ENCODE measurements at regions of chr3 and their contacts with region 1.

Region 1: GRCh38 chr3:53709860-53710674 is 136.2 kb downstream of the CHDH start:
- DNase-seq: peak in 2 of 3 donors; percentile 66 to 77
- ATAC-seq: peak; percentile 88
- H3K4me3 ChIP-seq: no peak overlapping the region
- H3K4me1 ChIP-seq: no peaks in the 10 kb centered on the region
- CTCF ChIP-seq: peak; percentile 62

Region 2: GRCh38 chr3:53295410-53295809 is 414.7 kb before region 1 on chr3:
- intact Hi-C with region 1: loop called in 1 of 2 experiments (anchors 5 kb)
- DNase-seq: no peak
- ATAC-seq: no peak
- H3K4me3 ChIP-seq: no peak overlapping the region
- H3K4me1 ChIP-seq: no peaks in the 10 kb centered on the region
- CTCF ChIP-seq: no peak

Region 3: GRCh38 chr3:53834429-53835095 is 124.5 kb after region 1 on chr3:
- intact Hi-C with region 1: no loop called
- DNase-seq: no peak
- ATAC-seq: no peak
- H3K4me3 ChIP-seq: no peak overlapping the region
- H3K4me1 ChIP-seq: no peaks in the 10 kb centered on the region
- CTCF ChIP-seq: no peak